AG04450 (cell line): ENCODE measurements at regions of chr6 and their contacts with region 1.

Region 1: DNA sequence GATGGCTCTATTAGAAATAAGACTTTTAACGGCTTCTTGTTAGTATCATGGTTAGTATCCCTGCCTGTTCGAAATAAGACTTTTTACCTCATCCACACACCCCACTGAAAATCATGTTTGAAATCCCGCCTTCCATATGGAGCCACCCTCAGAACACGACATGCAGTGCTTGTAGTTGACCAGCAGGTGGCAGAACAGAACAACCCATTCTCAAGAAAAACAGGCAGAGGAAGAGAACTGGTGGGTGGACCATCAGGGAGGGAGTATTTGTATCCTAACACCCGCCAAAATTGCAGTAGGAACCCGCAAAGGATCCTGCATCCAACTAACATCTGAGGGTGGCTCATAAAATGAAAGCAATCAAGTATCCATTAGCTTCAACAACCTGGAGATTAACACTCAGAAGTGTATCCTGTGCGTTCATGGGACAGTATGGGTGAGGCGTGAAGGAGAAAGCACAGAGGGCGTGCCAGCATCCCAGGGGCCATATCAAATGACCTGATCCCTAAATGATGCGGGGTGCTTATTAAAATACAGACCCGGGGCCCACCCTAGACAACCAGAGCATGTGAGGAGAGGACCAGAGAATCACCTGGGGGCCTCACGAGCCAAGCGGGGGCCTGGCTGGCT is 89.6 kb upstream of the NHSL1 start:
- DNase-seq: peak; percentile 67
- H3K4me3 ChIP-seq: no peak overlapping the region
- H3K27ac ChIP-seq: no peak overlapping the region
- H3K27me3 ChIP-seq: no peaks in the 10 kb centered on the region
- CTCF ChIP-seq: peak; percentile 92

Region 2: GRCh38 chr6:138403801-138404661 is 184.9 kb before region 1 on chr6 and contains the start of gene HEBP2:
- CTCF ChIA-PET with region 1: interaction called, 13 read pairs
- POLR2A ChIA-PET with region 1: no interaction called
- DNase-seq: no peak
- H3K4me3 ChIP-seq: peak within 1 kb of the TSS; percentile 74
- H3K27ac ChIP-seq: no peak within 1 kb of the TSS
- H3K27me3 ChIP-seq: peaks cover 2% of the 10 kb centered on the region
- CTCF ChIP-seq: peak; percentile 41
- polyA plus RNA-seq, gene HEBP2: 10.1 and 16.8 TPM in 2 replicates

Region 3: DNA sequence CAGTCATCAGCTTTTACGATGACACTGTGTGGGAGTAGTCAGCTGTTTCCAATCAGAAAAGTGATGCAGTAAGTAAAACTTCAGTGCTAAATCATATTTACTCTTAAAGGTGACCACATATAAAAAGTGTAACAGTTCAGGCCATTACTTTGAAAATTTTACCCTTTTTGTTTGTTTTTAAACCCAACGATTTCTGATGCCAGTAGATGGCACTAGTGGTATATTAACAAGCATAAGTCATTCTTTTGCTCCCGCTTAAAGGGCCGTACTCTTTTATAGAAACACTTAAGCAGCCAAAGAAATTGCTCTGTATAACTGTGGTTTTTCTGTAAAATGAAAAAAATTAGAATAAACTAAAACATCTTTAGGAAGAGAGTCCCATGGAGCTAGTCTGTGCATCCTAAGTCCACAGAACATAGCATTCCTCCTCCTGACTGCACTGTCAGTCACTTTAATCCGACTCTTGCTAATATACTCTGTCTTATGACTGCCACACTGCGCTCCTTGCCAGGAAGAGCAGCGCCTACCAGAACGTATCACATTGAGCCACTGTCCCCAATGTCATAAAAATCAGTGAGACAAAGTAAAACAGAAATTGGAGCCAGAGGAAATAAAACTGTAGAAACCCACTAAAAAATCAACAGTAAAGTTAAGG is 159.8 kb before region 1 on chr6:
- CTCF ChIA-PET with region 1: interaction called, 27 read pairs
- POLR2A ChIA-PET with region 1: no interaction called
- DNase-seq: peak; percentile 41
- H3K4me3 ChIP-seq: no peak overlapping the region
- H3K27ac ChIP-seq: no peak overlapping the region
- H3K27me3 ChIP-seq: no peaks in the 10 kb centered on the region
- CTCF ChIP-seq: peak; percentile 62

Region 4: GRCh38 chr6:138509371-138509770 is 79.5 kb before region 1 on chr6:
- CTCF ChIA-PET with region 1: interaction called, 11 read pairs
- POLR2A ChIA-PET with region 1: no interaction called
- DNase-seq: no peak
- H3K4me3 ChIP-seq: no peak overlapping the region
- H3K27ac ChIP-seq: no peak overlapping the region
- H3K27me3 ChIP-seq: no peaks in the 10 kb centered on the region
- CTCF ChIP-seq: peak; percentile 42

Region 5: DNA sequence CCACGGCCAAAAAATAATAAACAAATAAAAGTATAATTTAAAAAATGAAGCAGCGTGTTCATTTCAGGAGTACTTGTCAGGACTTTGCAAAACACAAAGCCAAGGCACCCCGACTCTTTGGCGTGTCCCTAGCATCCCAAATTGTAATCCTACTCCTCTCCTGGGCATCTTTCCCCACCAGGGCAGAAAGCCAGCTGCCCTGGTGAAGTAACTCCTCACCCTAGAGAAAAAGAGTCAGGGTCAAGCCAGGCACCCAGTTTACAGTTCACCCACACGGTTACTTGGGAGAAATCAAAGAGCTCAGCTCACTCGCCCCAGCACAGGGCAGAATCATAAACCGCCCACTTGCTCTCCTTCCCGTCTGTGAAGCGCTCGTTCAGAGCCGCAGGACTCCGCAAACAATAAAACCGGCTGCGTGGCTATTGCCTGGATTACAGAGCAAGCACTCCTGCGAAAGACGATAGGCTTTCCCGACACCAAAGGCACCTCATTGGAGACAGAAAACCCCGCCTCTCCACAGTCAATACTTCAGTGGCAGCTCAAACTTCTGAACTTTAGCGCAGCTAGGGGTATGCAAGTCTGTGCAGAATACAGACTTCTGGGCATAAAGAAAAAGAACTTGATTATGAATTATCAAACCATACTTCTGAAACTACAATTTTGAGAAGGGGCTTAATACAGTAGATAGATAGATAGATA is 16.6 kb before region 1 on chr6:
- CTCF ChIA-PET with region 1: interaction called, 19 read pairs
- POLR2A ChIA-PET with region 1: no interaction called
- DNase-seq: peak; percentile 85
- H3K4me3 ChIP-seq: peak overlapping the region; percentile 69
- H3K27ac ChIP-seq: peak overlapping the region; percentile 84
- H3K27me3 ChIP-seq: no peaks in the 10 kb centered on the region
- CTCF ChIP-seq: no peak

Region 6: DNA sequence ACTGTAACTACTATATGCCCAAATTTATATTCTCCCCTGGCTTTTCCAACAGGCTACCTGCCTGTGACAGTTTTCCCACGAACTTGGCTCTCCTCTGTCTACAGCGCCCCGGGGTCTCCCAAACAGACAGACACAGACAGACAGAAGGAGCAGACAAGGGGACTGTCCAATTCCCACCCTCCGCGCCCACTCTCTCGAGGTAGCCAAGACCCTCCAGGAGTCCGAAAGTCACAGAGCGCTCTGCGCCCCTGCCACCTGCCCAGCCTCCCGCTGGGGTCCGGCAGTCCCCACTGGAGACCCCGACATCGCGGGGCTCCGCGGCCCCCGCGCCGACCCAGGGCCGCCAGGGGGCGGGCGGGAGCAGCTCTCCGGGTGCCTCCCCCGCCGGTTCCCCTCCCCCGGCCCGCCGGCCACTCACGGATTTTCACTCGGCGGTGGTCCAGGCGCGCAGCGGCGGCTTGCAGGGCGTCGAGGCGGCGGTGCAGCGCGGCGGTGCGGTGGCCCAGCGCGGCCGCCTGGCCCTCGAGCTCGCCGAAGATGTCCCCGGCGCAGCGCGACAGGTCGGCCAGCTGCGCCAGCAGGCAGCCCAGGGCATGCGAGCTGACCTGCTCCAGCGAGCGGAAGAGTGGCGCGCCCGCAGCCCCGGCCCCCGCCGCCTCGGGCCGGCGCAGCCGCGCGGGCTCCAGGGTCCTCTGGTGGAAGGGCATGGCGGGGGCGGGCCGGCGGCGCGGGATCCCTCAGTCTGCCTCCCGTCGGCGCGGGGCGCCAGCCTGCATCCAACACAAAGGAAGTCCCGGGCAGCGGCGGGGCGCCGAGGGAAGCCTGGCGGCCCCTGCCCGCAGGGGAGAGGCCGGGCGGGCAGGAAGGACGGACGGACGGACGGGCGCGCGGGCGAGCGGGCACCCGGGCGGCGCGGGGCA is 103.4 kb after region 1 on chr6:
- CTCF ChIA-PET with region 1: interaction called, 10 read pairs
- POLR2A ChIA-PET with region 1: no interaction called
- DNase-seq: no peak
- H3K4me3 ChIP-seq: peak overlapping the region; percentile 78
- H3K27ac ChIP-seq: peak overlapping the region; percentile 70
- H3K27me3 ChIP-seq: no peaks in the 10 kb centered on the region
- CTCF ChIP-seq: peak; percentile 64

Region 7: DNA sequence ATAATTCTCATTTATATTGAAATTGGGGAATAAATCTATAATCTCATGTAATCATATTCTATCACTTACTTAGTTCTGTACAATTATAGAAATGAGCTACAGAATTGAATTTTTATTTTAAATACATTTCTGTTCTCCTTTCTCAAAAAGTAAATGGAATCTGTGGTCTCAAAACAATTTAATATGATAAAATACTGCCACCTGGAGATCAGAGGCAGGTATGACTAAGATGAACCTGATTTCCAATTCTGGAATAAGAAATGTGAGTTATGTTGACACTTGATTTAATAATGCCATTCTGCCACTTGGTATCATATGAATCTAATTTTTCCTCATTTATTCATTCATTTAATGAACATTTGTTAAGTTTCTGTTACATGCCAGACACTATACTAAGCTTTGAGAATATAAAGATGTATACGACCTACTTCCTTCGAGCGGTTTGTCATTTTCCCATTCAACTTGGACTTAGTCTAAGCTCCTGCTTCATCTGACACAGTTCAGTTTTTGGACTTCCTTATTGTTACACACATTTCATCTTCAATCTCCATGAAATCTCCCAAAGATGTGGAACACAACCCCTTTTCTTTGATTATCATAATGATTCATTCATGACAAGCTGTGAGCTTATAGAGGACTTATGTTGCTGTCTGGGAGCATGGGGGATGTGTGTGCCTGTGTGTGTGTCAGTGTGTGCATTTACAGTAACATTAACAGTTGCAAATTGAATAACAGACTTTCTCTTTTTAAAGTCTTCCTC is 177.2 kb after region 1 on chr6:
- CTCF ChIA-PET with region 1: interaction called, 181 read pairs
- POLR2A ChIA-PET with region 1: no interaction called
- DNase-seq: peak; percentile 8
- H3K4me3 ChIP-seq: no peak overlapping the region
- H3K27ac ChIP-seq: no peak overlapping the region
- H3K27me3 ChIP-seq: no peaks in the 10 kb centered on the region
- CTCF ChIP-seq: peak; percentile 60

Region 8: GRCh38 chr6:138795809-138796603 is 207.1 kb after region 1 on chr6 and contains the start of gene ECT2L:
- CTCF ChIA-PET with region 1: no interaction called
- POLR2A ChIA-PET with region 1: no interaction called
- DNase-seq: no peak
- H3K4me3 ChIP-seq: peak within 1 kb of the TSS; percentile 27; the same call in 1 of the 2 replicates
- H3K27ac ChIP-seq: no peak within 1 kb of the TSS
- H3K27me3 ChIP-seq: no peaks in the 10 kb centered on the region
- CTCF ChIP-seq: no peak
- polyA plus RNA-seq, gene ECT2L: 0.01 TPM in 1 of 2 replicates, not detected in the other